B cell (primary cell): ENCODE measurements at regions of chr13 and their contacts with region 1.

Region 1: DNA sequence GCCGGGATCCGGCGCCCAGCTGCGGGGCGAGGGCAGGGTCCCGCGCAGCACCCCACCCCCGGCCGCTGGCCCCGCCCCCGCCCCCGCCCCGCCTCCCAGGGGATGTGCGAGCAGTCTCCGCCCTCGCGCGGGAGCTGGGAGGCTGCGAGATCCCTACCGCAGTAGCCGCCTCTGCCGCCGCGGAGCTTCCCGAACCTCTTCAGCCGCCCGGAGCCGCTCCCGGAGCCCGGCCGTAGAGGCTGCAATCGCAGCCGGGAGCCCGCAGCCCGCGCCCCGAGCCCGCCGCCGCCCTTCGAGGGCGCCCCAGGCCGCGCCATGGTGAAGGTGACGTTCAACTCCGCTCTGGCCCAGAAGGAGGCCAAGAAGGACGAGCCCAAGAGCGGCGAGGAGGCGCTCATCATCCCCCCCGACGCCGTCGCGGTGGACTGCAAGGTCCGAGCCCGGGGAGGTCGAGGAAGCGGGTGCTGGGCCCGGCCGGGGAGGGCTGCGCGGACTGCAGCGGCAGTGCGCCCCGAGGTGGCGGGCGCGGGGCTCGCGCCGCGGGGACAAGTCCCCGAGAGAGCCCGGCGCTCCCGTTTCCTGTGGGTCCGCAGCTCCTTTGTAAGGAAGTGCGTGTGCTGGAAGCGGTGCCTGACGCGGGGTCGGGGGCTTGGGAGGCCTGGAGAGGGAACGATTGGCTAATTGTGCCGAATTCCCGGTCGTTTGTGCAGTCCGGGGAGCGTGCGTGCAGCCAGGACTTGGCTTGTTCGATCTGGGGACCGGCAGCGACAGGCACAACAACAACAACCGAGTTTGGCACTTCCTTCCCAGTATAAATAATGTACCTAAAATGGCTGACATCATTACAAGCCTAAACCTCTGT is at the start of gene ITM2B:
- DNase-seq: peak; percentile 80
- ATAC-seq: peak; percentile 78
- H3K4me3 ChIP-seq: peak within 1 kb of the TSS; percentile 84 to 98 (median 89)
- H3K4me3 Mint-ChIP-seq: peak within 1 kb of the TSS; percentile 96
- H3K27ac ChIP-seq: peak within 1 kb of the TSS; percentile 83 to 89
- H3K27ac Mint-ChIP-seq: peak within 1 kb of the TSS; percentile 97
- H3K4me1 ChIP-seq: peaks cover 27 to 36% of the 10 kb centered on the region in 2 donors
- H3K4me1 Mint-ChIP-seq: peaks cover 46% of the 10 kb centered on the region
- H3K27me3 ChIP-seq: no peaks in the 10 kb centered on the region
- H3K27me3 Mint-ChIP-seq: peaks cover 5% of the 10 kb centered on the region
- CTCF ChIP-seq: peak; percentile 57
- total RNA-seq, gene ITM2B: 165 and 177 TPM in 2 replicates

Region 2: GRCh38 chr13:48094781-48095502 is 138.3 kb before region 1 on chr13 and contains the start of gene MED4:
- CTCF ChIA-PET with region 1: interaction called, 15 read pairs
- POLR2A ChIA-PET with region 1: no interaction called
- intact Hi-C with region 1: no loop called
- DNase-seq: peak; percentile 97
- ATAC-seq: peak; percentile 99
- H3K4me3 ChIP-seq: peak within 1 kb of the TSS; percentile 86 to 99 (median 92)
- H3K4me3 Mint-ChIP-seq: peak within 1 kb of the TSS; percentile 94
- H3K27ac ChIP-seq: peak within 1 kb of the TSS; percentile 83 to 89
- H3K27ac Mint-ChIP-seq: peak within 1 kb of the TSS; percentile 95
- H3K4me1 ChIP-seq: peaks cover 16 to 17% of the 10 kb centered on the region in 2 donors
- H3K4me1 Mint-ChIP-seq: peaks cover 35% of the 10 kb centered on the region
- H3K27me3 ChIP-seq: no peaks in the 10 kb centered on the region
- H3K27me3 Mint-ChIP-seq: peaks cover 10% of the 10 kb centered on the region
- CTCF ChIP-seq: peak; percentile 99
- total RNA-seq, gene MED4: 49.7 and 50.1 TPM in 2 replicates

Region 3: GRCh38 chr13:48184260-48184659 is 49.0 kb before region 1 on chr13:
- CTCF ChIA-PET with region 1: interaction called, 7 read pairs
- POLR2A ChIA-PET with region 1: no interaction called
- intact Hi-C with region 1: loop called (anchors 5 kb)
- DNase-seq: peak; percentile 23
- ATAC-seq: no peak
- H3K4me3 ChIP-seq: no peak overlapping the region
- H3K4me3 Mint-ChIP-seq: peak overlapping the region; percentile 43
- H3K27ac ChIP-seq: peak overlapping the region; percentile 46 to 70
- H3K27ac Mint-ChIP-seq: peak overlapping the region; percentile 62
- H3K4me1 ChIP-seq: peaks cover 59 to 68% of the 10 kb centered on the region in 2 donors
- H3K4me1 Mint-ChIP-seq: peaks cover 59% of the 10 kb centered on the region
- H3K27me3 ChIP-seq: no peaks in the 10 kb centered on the region
- H3K27me3 Mint-ChIP-seq: no peaks in the 10 kb centered on the region
- CTCF ChIP-seq: no peak

Region 4: DNA sequence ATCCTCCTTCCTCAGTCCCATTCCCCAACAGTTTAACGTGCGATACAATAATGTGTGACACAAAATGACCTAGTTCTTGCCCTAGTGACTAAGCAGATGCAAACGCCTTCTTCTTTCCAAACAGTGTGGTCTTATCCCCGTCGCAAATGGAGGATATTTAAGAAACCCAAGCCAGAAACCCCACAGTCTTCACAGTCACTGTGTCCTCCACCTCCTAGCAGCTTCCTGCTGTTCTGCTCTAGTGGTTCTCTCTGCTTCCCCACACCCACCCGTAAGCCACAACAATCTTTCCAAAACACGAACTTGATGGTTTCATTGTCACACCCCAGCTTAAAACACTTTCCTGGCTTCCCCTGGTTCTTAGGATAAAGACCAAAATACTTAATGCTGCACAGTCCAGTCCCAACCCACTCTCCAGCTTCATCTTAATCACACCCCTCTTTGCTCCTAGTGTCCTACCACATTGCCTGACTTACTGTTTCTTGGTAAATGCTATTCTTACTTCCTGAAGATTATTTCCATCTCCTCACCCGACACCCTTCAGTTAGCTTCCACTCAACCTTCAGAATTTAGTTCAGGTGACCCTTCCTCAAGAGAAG is 32.0 kb after region 1 on chr13:
- CTCF ChIA-PET with region 1: interaction called, 4 read pairs
- POLR2A ChIA-PET with region 1: interaction called, 4 read pairs
- intact Hi-C with region 1: loop called (anchors 2 kb)
- DNase-seq: peak; percentile 73
- ATAC-seq: peak; percentile 91
- H3K4me3 ChIP-seq: peak overlapping the region in 3 of 5 experiments; percentile 29 to 53 (median 31)
- H3K4me3 Mint-ChIP-seq: peak overlapping the region; percentile 86
- H3K27ac ChIP-seq: peak overlapping the region; percentile 67 to 80
- H3K27ac Mint-ChIP-seq: peak overlapping the region; percentile 92
- H3K4me1 ChIP-seq: peaks cover 44 to 47% of the 10 kb centered on the region in 2 donors
- H3K4me1 Mint-ChIP-seq: peaks cover 51% of the 10 kb centered on the region
- H3K27me3 ChIP-seq: no peaks in the 10 kb centered on the region
- H3K27me3 Mint-ChIP-seq: no peaks in the 10 kb centered on the region
- CTCF ChIP-seq: no peak

Region 5: GRCh38 chr13:48318821-48319511 is 85.7 kb after region 1 on chr13:
- CTCF ChIA-PET with region 1: no interaction called
- POLR2A ChIA-PET with region 1: no interaction called
- intact Hi-C with region 1: loop called (anchors 5 kb)
- DNase-seq: peak; percentile 48
- ATAC-seq: peak; percentile 19
- H3K4me3 ChIP-seq: peak overlapping the region in 4 of 5 experiments; percentile 25 to 47 (median 38)
- H3K4me3 Mint-ChIP-seq: peak overlapping the region; percentile 81
- H3K27ac ChIP-seq: no peak overlapping the region
- H3K27ac Mint-ChIP-seq: peak overlapping the region; percentile 2
- H3K4me1 ChIP-seq: peaks cover 3 to 35% of the 10 kb centered on the region in 2 donors
- H3K4me1 Mint-ChIP-seq: peaks cover 44% of the 10 kb centered on the region
- H3K27me3 ChIP-seq: no peaks in the 10 kb centered on the region
- H3K27me3 Mint-ChIP-seq: no peaks in the 10 kb centered on the region
- CTCF ChIP-seq: no peak